ENCODE measurements at regions of chr19 and their contacts with region 1.

Region 1: DNA sequence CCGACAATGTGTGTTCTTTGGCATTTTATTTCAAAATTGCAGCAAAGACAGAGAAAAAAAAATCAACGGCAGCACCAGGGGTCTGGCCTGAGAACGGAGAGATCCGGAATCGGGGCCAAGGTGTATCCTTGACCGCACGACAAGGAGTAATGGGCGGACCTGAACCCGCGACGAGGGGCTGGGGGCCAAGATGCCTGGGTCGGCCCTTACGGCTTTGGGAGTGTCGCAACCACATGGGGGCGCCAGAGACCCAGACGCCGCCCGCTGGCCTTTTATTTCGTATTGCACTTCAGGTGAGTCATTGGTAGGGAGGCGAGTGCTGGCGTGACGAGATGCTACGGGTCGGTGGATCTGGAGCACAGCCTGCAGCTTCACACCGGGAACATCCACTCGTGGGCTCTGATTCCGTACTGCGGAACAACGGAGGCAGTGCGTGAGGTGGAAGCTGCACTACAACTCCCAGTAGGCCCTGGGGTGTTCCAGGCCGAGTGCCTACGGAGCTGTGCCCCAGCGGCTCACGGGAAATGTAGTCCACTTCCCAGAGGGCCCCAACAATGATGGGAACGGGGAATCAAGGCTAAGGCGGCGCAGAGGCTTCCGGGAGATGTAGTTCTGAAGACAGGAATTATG is 15.7 kb downstream of the BCAT2 start:
- DNase-seq: peak; percentile 72 to 87 (median 84)
- ATAC-seq: peak; percentile 99
- H3K4me3 ChIP-seq: peak overlapping the region; percentile 96
- H3K4me3 Mint-ChIP-seq: peak overlapping the region; percentile 74 to 99 (median 94)
- H3K27ac ChIP-seq: peak overlapping the region; percentile 67
- H3K27ac Mint-ChIP-seq: peak overlapping the region; percentile 83 to 95 (median 93)
- H3K4me1 ChIP-seq: peaks cover 4 to 6% of the 10 kb centered on the region in 2 donors
- H3K4me1 Mint-ChIP-seq: peaks cover 5 to 13% (median 7%) of the 10 kb centered on the region in 7 donors
- H3K27me3 ChIP-seq: no peaks in the 10 kb centered on the region
- H3K27me3 Mint-ChIP-seq: no peaks in the 10 kb centered on the region

Region 2: DNA sequence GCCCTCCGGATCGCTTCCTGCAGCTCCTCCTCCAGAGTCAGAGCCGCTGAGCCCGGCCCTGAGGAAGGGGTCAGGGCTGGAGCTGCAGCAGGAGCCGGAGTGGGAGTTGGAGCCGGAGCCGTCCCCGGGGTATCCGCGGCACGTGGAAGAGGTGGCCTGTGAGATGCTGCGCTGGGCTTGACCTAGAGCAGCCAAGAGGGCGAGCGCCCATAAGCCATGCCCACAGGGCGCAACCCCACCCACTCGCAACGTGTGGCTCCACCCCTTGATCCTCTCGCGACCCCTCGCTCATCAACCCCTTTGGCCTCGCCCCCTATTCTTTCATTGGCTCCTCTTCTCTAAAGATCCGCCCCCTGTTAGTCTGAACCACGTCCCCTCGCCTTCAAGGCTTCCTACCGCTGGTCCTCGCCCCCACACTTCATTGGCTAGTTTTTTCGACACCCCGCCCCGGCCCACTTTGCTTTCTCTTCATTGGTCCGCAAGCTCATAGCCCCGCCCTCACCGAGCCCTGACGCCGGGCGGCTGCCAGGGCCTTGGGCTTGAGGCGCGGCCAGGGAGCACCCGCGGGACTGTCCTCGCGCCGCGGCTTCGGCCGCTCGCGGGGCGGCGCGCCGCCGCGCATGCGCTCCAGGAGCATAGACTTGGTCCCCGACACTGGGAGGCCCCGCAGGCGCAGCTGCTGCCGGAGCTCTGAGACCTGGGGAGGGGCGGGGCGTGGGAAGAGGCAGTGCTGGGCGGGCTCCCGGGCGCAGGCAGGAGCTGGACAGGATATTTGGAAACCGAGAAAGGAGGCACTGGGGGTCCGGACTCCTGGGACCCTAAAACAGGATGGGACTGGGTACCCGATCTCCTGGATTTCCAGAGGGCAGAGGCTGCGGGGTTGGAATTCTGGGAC is 81.1 kb before region 1 on chr19:
- CTCF ChIA-PET with region 1: no interaction called
- POLR2A ChIA-PET with region 1: no interaction called
- intact Hi-C with region 1: loop called in 1 of 2 experiments (anchors 1 kb)
- DNase-seq: peak; percentile 92 to 97 (median 97)
- ATAC-seq: peak; percentile 96
- H3K4me3 ChIP-seq: peak overlapping the region; percentile 95
- H3K4me3 Mint-ChIP-seq: peak overlapping the region; percentile 82 to 92 (median 88)
- H3K27ac ChIP-seq: peak overlapping the region; percentile 79
- H3K27ac Mint-ChIP-seq: peak overlapping the region; percentile 16 to 90 (median 81)
- H3K4me1 ChIP-seq: peaks cover 11 to 12% of the 10 kb centered on the region in 2 donors
- H3K4me1 Mint-ChIP-seq: peaks cover 9 to 24% (median 20%) of the 10 kb centered on the region in 7 donors
- H3K27me3 ChIP-seq: no peaks in the 10 kb centered on the region
- H3K27me3 Mint-ChIP-seq: no peaks in the 10 kb centered on the region

Region 3: DNA sequence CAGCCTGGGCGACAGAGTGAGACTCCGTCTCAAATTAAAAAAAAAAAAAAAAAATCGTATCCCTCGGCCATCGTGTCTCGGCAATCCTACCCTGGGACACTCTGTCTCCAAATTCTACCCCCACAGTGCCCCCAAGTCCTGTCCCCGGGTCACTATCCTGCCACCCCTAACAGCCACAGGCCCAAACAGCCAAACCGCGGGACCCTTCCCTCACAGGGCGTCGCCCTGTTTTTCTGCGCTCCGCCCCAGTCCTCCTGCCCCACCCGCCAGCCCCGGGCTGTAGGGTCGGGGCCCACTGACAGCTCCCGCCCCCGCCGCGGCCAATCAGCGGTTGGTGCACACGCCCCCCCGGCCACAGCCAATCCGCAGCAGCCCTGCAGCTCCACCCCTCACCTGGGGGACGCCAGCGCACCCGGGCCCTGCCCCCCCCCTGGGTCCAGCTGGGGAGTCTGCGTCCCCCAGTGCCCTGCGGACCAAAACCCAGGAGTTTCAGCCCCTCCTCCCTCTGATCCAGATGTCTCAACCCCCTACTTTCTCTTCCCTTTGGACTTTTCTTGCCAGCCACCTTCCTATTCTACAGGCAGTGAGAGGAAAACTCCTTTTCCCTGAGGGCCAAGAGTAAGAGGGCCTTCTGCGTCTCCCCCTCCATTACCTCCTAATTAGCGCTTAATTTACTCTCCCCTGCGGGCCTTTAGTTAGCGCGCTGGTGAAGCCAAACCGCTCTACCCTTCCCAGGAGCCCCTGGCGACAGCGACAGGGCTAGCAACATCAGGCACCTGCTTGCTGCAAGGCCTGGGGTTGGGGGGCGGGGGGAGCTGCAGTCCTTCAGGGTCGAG is 17.1 kb after region 1 on chr19:
- CTCF ChIA-PET with region 1: interaction called, 18 read pairs
- POLR2A ChIA-PET with region 1: interaction called, 6 read pairs
- intact Hi-C with region 1: loop called (anchors 1 to 2 kb)
- DNase-seq: peak in 8 of 9 donors; percentile 25 to 68 (median 48)
- ATAC-seq: peak; percentile 65
- H3K4me3 ChIP-seq: no peak overlapping the region
- H3K4me3 Mint-ChIP-seq: peak overlapping the region; percentile 76 to 89 (median 82)
- H3K27ac ChIP-seq: peak overlapping the region; percentile 40
- H3K27ac Mint-ChIP-seq: peak overlapping the region; percentile 54 to 87 (median 78)
- H3K4me1 ChIP-seq: peaks cover 10% of the 10 kb centered on the region in 2 donors
- H3K4me1 Mint-ChIP-seq: peaks cover 16 to 49% (median 41%) of the 10 kb centered on the region in 7 donors
- H3K27me3 ChIP-seq: no peaks in the 10 kb centered on the region
- H3K27me3 Mint-ChIP-seq: no peaks in the 10 kb centered on the region

Region 4: DNA sequence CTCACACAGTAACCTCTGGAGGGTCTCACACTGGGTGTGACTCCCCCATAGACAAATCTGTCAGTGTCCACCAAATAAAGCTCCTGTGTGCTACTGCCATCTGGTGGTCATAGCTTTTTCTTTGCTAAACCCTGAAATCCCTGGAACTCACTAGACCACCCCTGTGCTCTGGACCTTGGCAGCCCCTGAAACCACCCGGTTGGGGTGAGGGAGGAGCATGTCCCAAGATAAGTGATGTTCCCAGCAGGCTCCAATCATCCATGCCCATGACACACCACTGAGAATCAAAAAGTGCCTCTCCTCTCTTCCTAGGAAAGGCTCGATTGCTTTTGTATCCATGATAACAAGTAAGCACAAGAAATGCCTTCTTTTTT is 47.6 kb after region 1 on chr19:
- CTCF ChIA-PET with region 1: interaction called, 100 read pairs
- POLR2A ChIA-PET with region 1: interaction called, 10 read pairs
- intact Hi-C with region 1: loop called (anchors 1 kb)
- DNase-seq: peak in 8 of 9 donors; percentile 37 to 62 (median 49)
- ATAC-seq: peak; percentile 67
- H3K4me3 ChIP-seq: no peak overlapping the region
- H3K4me3 Mint-ChIP-seq: peak overlapping the region in 1 of 10 donors; percentile 53
- H3K27ac ChIP-seq: no peak overlapping the region
- H3K27ac Mint-ChIP-seq: peak overlapping the region in 3 of 9 donors; percentile 44 to 53 (median 51)
- H3K4me1 ChIP-seq: no peaks in the 10 kb centered on the region
- H3K4me1 Mint-ChIP-seq: peaks cover 0 to 6% (median 3%) of the 10 kb centered on the region in 7 donors
- H3K27me3 ChIP-seq: no peaks in the 10 kb centered on the region
- H3K27me3 Mint-ChIP-seq: peaks cover 0 to 2% (median 0%) of the 10 kb centered on the region in 5 donors

Region 5: GRCh38 chr19:48899781-48900476 is 104.8 kb after region 1 on chr19 and contains the start of gene NUCB1:
- CTCF ChIA-PET with region 1: no interaction called
- POLR2A ChIA-PET with region 1: no interaction called
- intact Hi-C with region 1: loop called in 1 of 2 experiments (anchors 2 kb)
- DNase-seq: peak; percentile 92 to 99 (median 98)
- ATAC-seq: peak; percentile 100
- H3K4me3 ChIP-seq: peak within 1 kb of the TSS; percentile 92
- H3K4me3 Mint-ChIP-seq: peak within 1 kb of the TSS; percentile 87 to 100 (median 98)
- H3K27ac ChIP-seq: peak within 1 kb of the TSS; percentile 92
- H3K27ac Mint-ChIP-seq: peak within 1 kb of the TSS; percentile 78 to 100 (median 98)
- H3K4me1 ChIP-seq: peaks cover 11 to 12% of the 10 kb centered on the region in 2 donors
- H3K4me1 Mint-ChIP-seq: peaks cover 14 to 44% (median 32%) of the 10 kb centered on the region in 7 donors
- H3K27me3 ChIP-seq: peaks cover 2 to 4% of the 10 kb centered on the region in 2 donors
- H3K27me3 Mint-ChIP-seq: peaks cover under 1 to 11% (median 2%) of the 10 kb centered on the region in 5 donors
- total RNA-seq, gene NUCB1: 128 to 252 (median 142) TPM

Region 6: DNA sequence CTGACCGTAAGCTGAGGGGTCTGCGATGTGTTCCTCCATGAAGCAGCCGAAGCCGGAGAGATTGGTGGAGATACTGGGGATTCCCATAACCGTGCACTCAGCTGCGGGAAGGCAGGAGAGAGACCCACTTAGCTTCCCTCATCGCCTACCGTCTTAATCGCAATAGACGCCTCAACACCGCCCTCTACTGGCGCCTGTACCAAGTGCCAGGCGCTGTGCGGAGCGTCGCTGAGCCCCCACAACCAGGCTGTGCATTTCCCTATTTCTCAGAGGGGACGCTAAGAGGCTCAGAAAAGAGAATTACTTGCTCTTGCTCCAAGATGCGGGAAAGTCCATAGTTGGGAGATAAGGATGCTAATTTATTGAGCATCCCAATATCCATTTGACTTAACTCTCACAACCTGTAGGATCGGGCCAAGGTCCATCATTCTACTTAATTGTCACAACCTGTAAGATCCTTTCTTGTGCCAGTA is 175.8 kb after region 1 on chr19:
- CTCF ChIA-PET with region 1: interaction called, 20 read pairs
- POLR2A ChIA-PET with region 1: interaction called, 12 read pairs
- intact Hi-C with region 1: loop called (anchors 1 kb)
- DNase-seq: peak; percentile 57 to 81 (median 72)
- ATAC-seq: peak; percentile 85
- H3K4me3 ChIP-seq: no peak overlapping the region
- H3K4me3 Mint-ChIP-seq: peak overlapping the region in 1 of 10 donors; percentile 18
- H3K27ac ChIP-seq: no peak overlapping the region
- H3K27ac Mint-ChIP-seq: peak overlapping the region in 4 of 9 donors; percentile 26 to 77 (median 42)
- H3K4me1 ChIP-seq: peaks cover 8 to 11% of the 10 kb centered on the region in 2 donors
- H3K4me1 Mint-ChIP-seq: peaks cover 5 to 26% (median 20%) of the 10 kb centered on the region in 7 donors
- H3K27me3 ChIP-seq: no peaks in the 10 kb centered on the region
- H3K27me3 Mint-ChIP-seq: no peaks in the 10 kb centered on the region

Measured in naive thymus-derived CD4-positive, alpha-beta T cell (primary cell).